Lower lobe of right lung (tissue), 2 donors: ENCODE measurements at regions of chr7 and their contacts with region 1.

Region 1: DNA sequence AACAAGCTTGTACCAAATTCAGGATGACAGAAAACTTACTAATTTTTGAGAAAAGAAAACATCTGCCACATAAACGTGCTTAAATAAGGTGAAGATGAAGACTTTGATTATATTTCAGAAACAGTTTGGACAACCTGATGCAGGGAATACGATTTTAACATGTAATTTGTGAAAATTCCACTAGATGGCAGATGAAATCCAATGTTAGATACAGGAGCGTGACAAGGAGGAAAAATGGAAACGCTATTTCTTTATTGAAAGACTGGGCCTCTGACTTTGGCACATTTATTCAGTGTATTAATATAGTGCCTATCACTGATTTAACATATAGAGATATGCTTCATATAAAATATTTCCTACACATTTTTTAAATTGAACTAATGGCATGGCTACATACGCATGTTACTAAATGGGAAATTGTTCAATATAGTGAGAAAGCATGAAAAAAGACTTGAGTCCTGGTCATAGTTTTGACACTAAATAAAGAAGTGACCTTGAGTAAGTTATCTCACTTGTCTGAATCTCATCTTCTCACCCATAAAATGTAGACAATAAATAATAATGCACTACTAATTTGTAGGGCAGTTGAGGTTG is 60.7 kb downstream of the CD36 start:
- DNase-seq: no peak
- ATAC-seq: peak; percentile 72 to 87
- H3K4me3 ChIP-seq: no peak overlapping the region
- H3K27ac ChIP-seq: no peak overlapping the region
- H3K4me1 ChIP-seq: peaks cover 7% of the 10 kb centered on the region
- H3K27me3 ChIP-seq: no peaks in the 10 kb centered on the region
- CTCF ChIP-seq: peak; percentile 65

Region 2: DNA sequence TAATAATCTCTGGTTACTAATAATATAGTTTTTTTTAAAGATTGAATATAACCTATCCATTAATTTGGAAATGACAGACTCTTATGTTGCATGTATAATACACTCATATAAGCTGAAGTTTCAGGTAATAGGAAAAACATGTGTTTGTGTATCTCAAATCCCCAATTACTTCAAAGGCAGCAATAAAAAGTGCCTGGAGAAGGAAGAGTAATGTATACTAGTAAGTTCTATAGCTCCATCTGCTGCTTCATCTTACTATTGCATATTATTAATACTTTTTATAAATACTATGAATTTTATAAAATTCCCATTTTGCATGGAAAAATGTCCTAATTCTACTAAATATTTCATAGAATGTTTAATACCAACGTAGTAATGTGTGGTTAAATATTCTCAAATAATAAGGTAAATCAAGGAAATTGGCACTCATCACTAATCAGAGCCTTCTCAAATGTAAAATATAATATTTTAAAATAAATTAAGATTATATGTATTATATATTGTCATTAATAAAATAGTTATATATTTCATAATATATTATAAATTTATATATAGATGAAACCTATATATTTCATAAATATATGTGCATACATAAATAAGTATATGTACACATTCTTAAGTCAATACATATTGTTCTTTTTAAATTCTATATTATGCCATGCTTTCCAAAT is 758.8 kb after region 1 on chr7:
- intact Hi-C with region 1: loop called (anchors 10 kb)
- DNase-seq: no peak
- ATAC-seq: no peak
- H3K4me3 ChIP-seq: no peak overlapping the region
- H3K27ac ChIP-seq: no peak overlapping the region
- H3K4me1 ChIP-seq: no peaks in the 10 kb centered on the region
- H3K27me3 ChIP-seq: no peaks in the 10 kb centered on the region
- CTCF ChIP-seq: peak; percentile 28